Activated naive CD4-positive, alpha-beta T cell treated with anti-CD3 and anti-CD28 coated beads for 36 hours (primary cell): ENCODE measurements at regions of chr6 and their contacts with region 1.

Region 1: DNA sequence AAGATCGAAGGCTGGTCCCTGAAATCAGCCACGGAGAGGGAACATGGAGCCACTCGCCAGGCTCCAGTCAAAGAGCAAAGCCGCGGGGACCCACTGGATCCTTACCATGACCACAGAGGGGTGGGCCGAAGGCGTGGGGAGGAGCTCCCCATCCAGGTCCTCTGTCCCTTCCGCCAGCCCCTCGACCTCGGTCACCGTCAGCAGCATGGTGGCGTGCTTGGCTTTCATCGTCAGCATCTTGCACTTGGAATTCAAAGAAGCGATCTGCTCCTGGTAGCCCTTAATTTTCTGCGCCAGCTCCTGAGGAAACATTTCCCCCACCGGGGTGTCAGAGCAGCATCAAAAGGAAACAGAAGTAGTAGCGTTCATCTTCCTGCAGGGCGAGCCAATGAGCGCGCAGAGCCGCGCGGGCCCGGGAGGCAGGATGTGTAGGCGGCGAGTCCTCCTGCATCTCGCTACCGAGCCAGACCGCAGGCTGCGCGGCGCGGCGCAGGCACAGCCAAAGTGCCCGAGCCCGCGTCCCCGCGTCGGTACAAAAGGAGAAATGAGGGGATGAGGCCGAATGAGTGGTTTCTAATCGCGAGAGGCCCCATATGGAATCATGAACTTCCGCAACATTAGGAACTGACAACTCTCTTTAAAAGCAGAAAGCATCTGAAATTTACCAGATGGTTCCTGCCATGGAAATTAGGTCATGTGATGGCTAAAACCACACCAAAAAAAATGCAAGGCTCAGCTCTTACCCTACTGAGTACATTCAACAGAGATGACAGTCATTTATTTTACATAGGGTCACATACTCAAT is 335.2 kb downstream of the SYNE1 start:
- DNase-seq: peak; percentile 93
- H3K4me3 Mint-ChIP-seq: peak overlapping the region; percentile 100
- H3K27ac Mint-ChIP-seq: peak overlapping the region; percentile 96
- H3K4me1 Mint-ChIP-seq: peaks cover 30% of the 10 kb centered on the region
- H3K27me3 Mint-ChIP-seq: no peaks in the 10 kb centered on the region

Region 2: GRCh38 chr6:152170705-152171667 is 131.0 kb before region 1 on chr6:
- CTCF ChIA-PET with region 1: no interaction called
- intact Hi-C with region 1: loop called (anchors 5 kb)
- DNase-seq: peak; percentile 82
- H3K4me3 Mint-ChIP-seq: peak overlapping the region; percentile 60
- H3K27ac Mint-ChIP-seq: peak overlapping the region; percentile 89
- H3K4me1 Mint-ChIP-seq: peaks cover 50% of the 10 kb centered on the region
- H3K27me3 Mint-ChIP-seq: no peaks in the 10 kb centered on the region

Region 3: DNA sequence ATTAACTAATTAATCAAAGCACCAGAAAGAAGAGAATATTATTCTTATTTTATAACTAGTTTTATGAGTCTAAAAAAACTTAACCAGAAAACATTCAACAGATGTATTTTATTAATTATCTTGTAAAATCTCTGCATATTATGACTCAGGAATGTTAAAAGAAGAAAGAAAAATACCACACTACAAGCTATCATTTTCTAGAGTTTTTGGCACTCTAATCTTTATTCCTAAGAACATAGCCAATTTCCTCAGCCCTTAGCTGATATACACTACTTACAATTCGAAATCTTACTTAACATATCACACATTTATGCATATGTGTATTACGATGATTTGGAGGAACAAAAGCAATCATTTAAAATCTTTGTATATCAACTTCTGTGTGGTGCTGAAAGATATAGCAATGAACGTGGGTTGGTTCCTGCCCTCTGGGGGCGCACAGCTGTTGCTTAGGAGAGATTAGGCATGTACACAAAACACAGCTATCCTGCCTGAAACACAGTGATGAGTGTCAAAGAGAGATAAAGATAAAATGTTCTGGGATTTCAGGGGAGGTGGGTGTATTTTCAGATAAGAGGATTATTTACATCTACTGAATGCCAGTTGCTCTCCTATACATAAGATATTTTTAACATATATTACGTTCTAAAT is 69.3 kb before region 1 on chr6:
- CTCF ChIA-PET with region 1: interaction called, 3 read pairs
- intact Hi-C with region 1: loop called (anchors 2 kb)
- DNase-seq: peak; percentile 54
- H3K4me3 Mint-ChIP-seq: peak overlapping the region; percentile 73
- H3K27ac Mint-ChIP-seq: no peak overlapping the region
- H3K4me1 Mint-ChIP-seq: peaks cover 26% of the 10 kb centered on the region
- H3K27me3 Mint-ChIP-seq: no peaks in the 10 kb centered on the region

Region 4: DNA sequence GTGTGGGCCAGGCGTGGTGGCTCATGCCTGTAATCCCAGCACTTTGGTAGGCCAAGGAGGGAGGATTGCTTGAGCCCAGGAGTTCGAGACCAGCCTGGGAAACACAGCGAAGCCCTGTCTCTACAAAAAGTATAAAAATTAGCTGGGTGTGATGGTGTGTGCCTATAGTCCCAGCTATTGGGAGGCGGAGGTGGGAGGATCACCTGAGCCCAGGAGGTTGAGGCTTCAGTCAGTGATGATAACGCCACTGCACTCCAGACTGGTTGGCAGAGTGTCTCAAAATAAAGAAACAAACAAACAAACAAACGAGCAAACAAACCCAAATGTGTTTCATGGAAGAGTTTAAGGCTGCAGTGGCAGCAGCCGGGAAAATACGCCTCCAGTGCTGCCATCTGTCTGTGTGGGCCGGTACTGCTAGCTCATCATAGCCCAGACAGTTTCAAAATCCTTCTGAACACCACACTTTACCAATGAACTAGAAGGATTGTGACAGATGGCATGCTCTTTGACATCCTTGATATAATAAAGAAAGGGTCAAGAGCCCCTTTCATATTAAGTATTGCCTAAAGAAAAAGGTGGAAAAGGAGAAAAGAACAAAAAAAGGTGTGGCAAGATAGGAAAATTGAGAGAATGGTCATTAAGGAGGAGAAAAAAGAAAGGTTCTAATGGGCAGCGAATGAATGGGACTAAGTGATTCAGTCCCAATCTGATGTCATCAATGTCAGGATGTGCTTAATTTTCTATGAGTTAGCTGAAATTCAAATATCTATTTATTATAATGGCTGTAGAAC is 36.6 kb after region 1 on chr6:
- CTCF ChIA-PET with region 1: interaction called, 57 read pairs
- intact Hi-C with region 1: loop called (anchors 1 kb)
- DNase-seq: peak; percentile 69
- H3K4me3 Mint-ChIP-seq: no peak overlapping the region
- H3K27ac Mint-ChIP-seq: no peak overlapping the region
- H3K4me1 Mint-ChIP-seq: no peaks in the 10 kb centered on the region
- H3K27me3 Mint-ChIP-seq: no peaks in the 10 kb centered on the region

Region 5: GRCh38 chr6:152356451-152357061 is 54.6 kb after region 1 on chr6:
- CTCF ChIA-PET with region 1: interaction called, 5 read pairs
- intact Hi-C with region 1: loop called (anchors 5 kb)
- DNase-seq: peak; percentile 16
- H3K4me3 Mint-ChIP-seq: no peak overlapping the region
- H3K27ac Mint-ChIP-seq: no peak overlapping the region
- H3K4me1 Mint-ChIP-seq: peaks cover 2% of the 10 kb centered on the region
- H3K27me3 Mint-ChIP-seq: no peaks in the 10 kb centered on the region

Region 6: GRCh38 chr6:152982768-152983636 is 681.0 kb after region 1 on chr6 and contains the start of gene FBXO5:
- CTCF ChIA-PET with region 1: no interaction called
- intact Hi-C with region 1: loop called (anchors 5 kb)
- DNase-seq: peak; percentile 97
- H3K4me3 Mint-ChIP-seq: peak within 1 kb of the TSS; percentile 99
- H3K27ac Mint-ChIP-seq: peak within 1 kb of the TSS; percentile 100
- H3K4me1 Mint-ChIP-seq: peaks cover 44% of the 10 kb centered on the region
- H3K27me3 Mint-ChIP-seq: no peaks in the 10 kb centered on the region
- total RNA-seq, gene FBXO5: 61.4 to 62.3 TPM

Region 7: GRCh38 chr6:153002607-153003365 is 700.8 kb after region 1 on chr6 and contains the start of gene MTRF1L:
- CTCF ChIA-PET with region 1: no interaction called
- intact Hi-C with region 1: loop called (anchors 5 kb)
- DNase-seq: peak; percentile 95
- H3K4me3 Mint-ChIP-seq: peak within 1 kb of the TSS; percentile 98
- H3K27ac Mint-ChIP-seq: peak within 1 kb of the TSS; percentile 94
- H3K4me1 Mint-ChIP-seq: peaks cover 33% of the 10 kb centered on the region
- H3K27me3 Mint-ChIP-seq: no peaks in the 10 kb centered on the region
- total RNA-seq, gene MTRF1L: 11.6 to 12.0 TPM

Region 8: DNA sequence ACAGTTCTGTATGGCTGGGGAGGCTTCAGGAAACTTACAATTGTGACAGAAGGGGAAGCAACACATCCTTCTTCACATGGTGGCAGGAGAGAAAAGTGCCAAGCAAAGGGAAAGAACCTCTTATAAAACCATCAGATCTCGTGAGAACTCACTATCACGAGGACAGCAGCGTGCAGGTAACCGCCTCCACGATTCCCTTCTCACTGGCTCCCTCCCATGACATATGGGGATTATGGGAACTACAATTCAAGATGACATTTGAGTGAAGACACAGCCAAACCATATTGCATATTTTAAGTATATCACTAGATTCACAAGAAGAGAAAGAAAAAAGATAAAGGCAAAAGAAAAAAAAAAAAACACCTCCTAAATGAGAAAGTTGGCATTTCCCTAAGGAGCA is 1261.0 kb after region 1 on chr6:
- CTCF ChIA-PET with region 1: no interaction called
- intact Hi-C with region 1: no loop called
- DNase-seq: no peak
- H3K4me3 Mint-ChIP-seq: no peak overlapping the region
- H3K27ac Mint-ChIP-seq: no peak overlapping the region
- H3K4me1 Mint-ChIP-seq: no peaks in the 10 kb centered on the region
- H3K27me3 Mint-ChIP-seq: no peaks in the 10 kb centered on the region